ENCODE measurements at regions of chr11 and their contacts with region 1.

Region 1: DNA sequence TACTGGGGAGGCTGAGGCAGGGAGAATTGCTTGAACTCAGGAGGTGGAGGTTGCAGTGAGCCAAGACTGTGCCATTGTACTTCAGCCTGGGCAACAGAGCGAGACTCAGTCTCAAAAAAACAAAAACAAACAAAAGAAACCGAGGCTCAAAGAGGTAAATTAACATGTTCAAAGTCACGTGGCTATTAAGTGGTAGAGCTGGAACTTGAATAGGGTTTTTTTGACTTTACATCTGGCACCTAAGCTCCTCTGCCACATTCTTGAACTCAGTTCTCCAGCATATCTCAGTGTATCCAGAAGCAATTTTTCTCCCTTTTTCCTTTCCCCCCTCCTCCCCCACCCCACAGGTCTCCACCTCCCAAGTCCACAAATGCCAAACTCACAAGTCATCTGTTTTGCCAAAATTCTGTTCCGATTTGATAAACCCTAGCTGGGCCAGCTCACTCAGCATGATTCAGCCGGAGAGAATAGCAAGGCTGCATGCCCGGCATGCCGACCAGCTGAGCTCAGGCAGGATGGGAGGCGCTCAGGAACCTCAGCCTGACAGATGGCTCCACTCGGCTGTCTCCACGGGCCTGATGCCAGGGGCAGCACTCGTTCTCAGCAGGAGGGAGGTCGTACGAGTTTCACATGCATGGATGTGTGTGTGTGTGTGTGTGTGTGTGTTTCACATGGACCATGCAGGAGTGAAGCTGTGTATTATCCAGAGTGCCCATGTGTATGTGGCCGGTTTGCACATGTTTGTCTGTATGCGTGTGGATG is 63.2 kb upstream of the RRAS2 start:
- DNase-seq: peak; percentile 100
- H3K4me3 ChIP-seq: no peak overlapping the region
- H3K27ac ChIP-seq: peak overlapping the region; percentile 88
- H3K27me3 ChIP-seq: no peaks in the 10 kb centered on the region
- CTCF ChIP-seq: no peak

Region 2: DNA sequence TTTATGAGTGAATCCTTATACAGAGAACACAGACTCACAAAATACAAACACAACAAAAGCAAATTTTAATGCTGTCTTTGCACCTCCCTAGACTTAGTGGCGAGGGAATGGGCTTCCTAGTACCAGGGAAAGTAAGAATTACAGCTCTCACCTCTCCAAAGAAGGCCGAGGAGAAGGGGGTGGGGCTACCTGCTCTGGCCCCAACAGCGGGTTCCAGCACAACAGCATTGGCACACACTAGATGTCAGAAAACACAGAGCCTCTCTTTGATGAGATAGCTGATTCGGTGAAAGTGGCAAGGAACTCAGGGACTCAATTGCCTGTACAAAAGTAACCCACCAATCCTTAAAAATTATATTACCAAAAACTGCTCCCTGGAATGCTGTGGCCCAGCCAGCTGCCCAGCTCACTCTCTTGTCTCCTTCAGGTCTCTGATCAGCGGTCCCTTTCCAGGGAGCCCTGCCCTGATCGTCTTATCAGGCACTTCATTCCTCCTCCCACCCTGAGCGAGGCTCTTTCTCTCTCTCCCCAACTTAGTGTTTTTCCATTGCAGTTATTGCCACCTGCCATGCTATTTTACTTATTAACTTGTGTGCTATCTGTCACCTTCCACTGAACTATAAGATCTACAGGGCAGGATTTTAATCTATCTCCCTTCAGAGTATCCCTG is 429.0 kb before region 1 on chr11:
- CTCF ChIA-PET with region 1: no interaction called
- POLR2A ChIA-PET with region 1: no interaction called
- DNase-seq: no peak
- H3K4me3 ChIP-seq: no peak overlapping the region
- H3K27ac ChIP-seq: no peak overlapping the region
- H3K27me3 ChIP-seq: no peaks in the 10 kb centered on the region
- CTCF ChIP-seq: no peak

Region 3: GRCh38 chr11:14308114-14308896 is 113.9 kb before region 1 on chr11:
- CTCF ChIA-PET with region 1: interaction called, 8 read pairs
- POLR2A ChIA-PET with region 1: interaction called, 12 read pairs
- DNase-seq: no peak
- H3K4me3 ChIP-seq: no peak overlapping the region
- H3K27ac ChIP-seq: no peak overlapping the region
- H3K27me3 ChIP-seq: no peaks in the 10 kb centered on the region
- CTCF ChIP-seq: peak; percentile 73

Region 4: GRCh38 chr11:14358729-14359439 is 63.3 kb before region 1 on chr11 and contains the start of gene RRAS2:
- CTCF ChIA-PET with region 1: no interaction called
- POLR2A ChIA-PET with region 1: interaction called, 27 read pairs
- DNase-seq: no peak
- H3K4me3 ChIP-seq: peak within 1 kb of the TSS; percentile 82
- H3K27ac ChIP-seq: peak within 1 kb of the TSS; percentile 57
- H3K27me3 ChIP-seq: no peaks in the 10 kb centered on the region
- CTCF ChIP-seq: no peak
- polyA plus RNA-seq, gene RRAS2: 74.5 and 95.8 TPM in 2 replicates

Region 5: GRCh38 chr11:14656536-14657457 is 234.6 kb after region 1 on chr11:
- CTCF ChIA-PET with region 1: no interaction called
- POLR2A ChIA-PET with region 1: no interaction called
- DNase-seq: no peak
- H3K4me3 ChIP-seq: no peak overlapping the region
- H3K27ac ChIP-seq: no peak overlapping the region
- H3K27me3 ChIP-seq: no peaks in the 10 kb centered on the region
- CTCF ChIP-seq: no peak

Region 6: GRCh38 chr11:15136166-15136565 is 713.9 kb after region 1 on chr11:
- CTCF ChIA-PET with region 1: no interaction called
- POLR2A ChIA-PET with region 1: no interaction called
- DNase-seq: no peak
- H3K4me3 ChIP-seq: no peak overlapping the region
- H3K27ac ChIP-seq: no peak overlapping the region
- H3K27me3 ChIP-seq: no peaks in the 10 kb centered on the region
- CTCF ChIP-seq: no peak